ENCODE measurements at regions of chr15 and their contacts with region 1.

Region 1: DNA sequence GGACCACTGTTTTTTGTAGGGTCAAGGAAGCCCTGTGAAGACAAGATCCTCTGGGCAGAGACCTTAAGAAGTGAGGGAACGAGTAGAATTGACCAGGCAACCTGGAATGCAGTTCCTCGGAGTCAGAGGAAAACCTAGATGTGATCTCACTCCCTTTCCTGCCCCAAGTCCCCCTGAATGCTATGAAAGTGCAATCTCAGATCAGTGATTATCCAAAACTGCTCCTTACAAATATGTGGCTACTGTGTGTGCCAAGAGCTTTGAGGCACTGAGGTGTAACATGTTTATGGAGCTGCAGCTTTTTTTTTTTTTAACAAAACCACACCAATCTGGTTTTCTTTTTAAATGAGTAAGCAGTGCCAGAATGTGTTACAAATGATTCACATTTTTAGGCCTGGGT is 35.8 kb downstream of the THSD4 start:
- DNase-seq: no peak
- ATAC-seq: no peak
- H3K4me3 ChIP-seq: no peak overlapping the region
- H3K27ac ChIP-seq: peak overlapping the region in 1 of 4 donors; percentile 79
- H3K4me1 ChIP-seq: peaks cover 36 to 44% of the 10 kb centered on the region in 2 donors
- H3K27me3 ChIP-seq: no peaks in the 10 kb centered on the region
- CTCF ChIP-seq: no peak
- POLR2A ChIP-seq: no peak

Region 2: GRCh38 chr15:71114896-71115554 is 36.1 kb before region 1 on chr15 and contains the start of gene THSD4:
- in situ Hi-C with region 1: no loop called
- intact Hi-C with region 1: loop called (anchors 5 kb)
- DNase-seq: peak; percentile 18 to 60
- ATAC-seq: peak; percentile 73 to 89
- H3K4me3 ChIP-seq: peak within 1 kb of the TSS; percentile 60 to 71 (median 64)
- H3K27ac ChIP-seq: peak within 1 kb of the TSS in 3 of 4 donors; percentile 65 to 79 (median 76)
- H3K4me1 ChIP-seq: peaks cover 10 to 13% of the 10 kb centered on the region in 2 donors
- H3K27me3 ChIP-seq: no peaks in the 10 kb centered on the region
- CTCF ChIP-seq: peak; percentile 93 to 99 (median 96)
- POLR2A ChIP-seq: no peak
- total RNA-seq, gene THSD4: 0.35 to 3.1 (median 0.60) TPM

Region 3: DNA sequence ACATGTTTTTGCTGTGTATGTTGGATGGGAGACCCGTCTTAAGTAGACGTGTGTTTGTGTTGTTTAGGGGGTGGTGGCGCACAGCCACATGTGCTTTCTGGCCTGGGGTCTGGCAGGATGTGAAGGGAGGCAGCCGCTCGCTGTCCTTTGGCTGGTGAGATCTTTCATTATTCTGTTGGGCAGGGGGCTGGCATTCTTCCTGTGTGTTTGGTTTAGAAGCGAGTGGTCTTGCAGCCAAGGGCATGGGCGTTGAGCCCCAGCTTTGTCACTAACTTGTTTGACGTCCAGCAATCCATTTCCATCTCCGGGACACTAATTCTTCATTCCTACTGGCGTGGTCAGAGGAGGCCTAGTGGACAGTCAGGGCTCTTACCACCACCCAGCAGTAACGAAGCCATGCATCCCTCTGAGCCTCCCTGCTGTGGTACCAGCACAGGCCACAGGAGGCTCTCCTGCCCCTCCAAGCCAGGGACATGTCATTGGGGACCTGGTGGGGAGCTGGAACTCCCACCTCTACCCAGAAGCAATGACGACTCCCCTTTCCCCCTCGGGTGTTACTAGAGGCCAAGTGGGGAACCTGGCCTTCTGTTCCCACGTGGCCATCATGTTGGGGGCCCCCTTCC is 25.1 kb before region 1 on chr15:
- in situ Hi-C with region 1: no loop called
- intact Hi-C with region 1: loop called (anchors 2 kb)
- DNase-seq: peak in 1 of 2 donors; percentile 32
- ATAC-seq: no peak
- H3K4me3 ChIP-seq: no peak overlapping the region
- H3K27ac ChIP-seq: peak overlapping the region; percentile 58 to 85 (median 78)
- H3K4me1 ChIP-seq: peaks cover 50 to 53% of the 10 kb centered on the region in 2 donors
- H3K27me3 ChIP-seq: no peaks in the 10 kb centered on the region
- CTCF ChIP-seq: peak in 4 of 5 experiments; percentile 15 to 55 (median 26)
- POLR2A ChIP-seq: no peak

Region 4: GRCh38 chr15:71294886-71295638 is 144.0 kb after region 1 on chr15:
- in situ Hi-C with region 1: no loop called
- intact Hi-C with region 1: no loop called
- DNase-seq: peak in 1 of 2 donors; percentile 15
- ATAC-seq: peak; percentile 86 to 88
- H3K4me3 ChIP-seq: no peak overlapping the region
- H3K27ac ChIP-seq: peak overlapping the region; percentile 2 to 47 (median 29)
- H3K4me1 ChIP-seq: peaks cover 0 to 8% of the 10 kb centered on the region in 2 donors
- H3K27me3 ChIP-seq: no peaks in the 10 kb centered on the region
- CTCF ChIP-seq: no peak
- POLR2A ChIP-seq: no peak

Measured in gastrocnemius medialis (tissue), 4 donors.